Dorsolateral prefrontal cortex (tissue), 120 donors: ENCODE measurements at regions of chr6 and their contacts with region 1.

Region 1: GRCh38 chr6:26097268-26097875 is 10.1 kb downstream of the HFE start:
- DNase-seq: peak in 7 of 10 donors; percentile 58 to 75 (median 64)
- H3K4me3 ChIP-seq: no peak overlapping the region
- H3K27ac ChIP-seq: no peak overlapping the region
- H3K27me3 ChIP-seq: no peaks in the 10 kb centered on the region
- CTCF ChIP-seq: peak; percentile 61 to 94 (median 86)

Region 2: DNA sequence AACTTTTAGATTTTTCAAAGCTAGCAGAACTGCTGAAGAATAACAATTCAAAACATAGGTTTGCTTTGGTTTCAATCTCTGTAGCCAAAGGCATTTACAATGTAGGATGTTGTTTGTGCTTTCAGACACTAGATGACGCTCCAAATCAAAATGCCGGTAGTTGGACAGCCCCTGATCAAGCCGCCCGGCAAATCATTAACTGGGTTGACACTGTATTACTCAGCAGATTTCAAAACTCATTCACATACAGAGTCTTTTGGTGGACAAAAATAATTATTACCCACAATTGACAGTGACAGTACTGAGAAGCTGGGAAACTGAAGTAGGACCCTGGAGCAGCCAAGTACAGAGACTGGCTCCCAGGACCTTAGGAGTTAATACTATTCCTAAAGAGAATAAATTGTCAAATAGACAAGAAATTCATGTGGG is 31.4 kb before region 1 on chr6:
- intact Hi-C with region 1: loop called (anchors 1 to 2 kb)
- DNase-seq: peak in 4 of 10 donors; percentile 16 to 45 (median 30)
- H3K4me3 ChIP-seq: peak overlapping the region in 41 of 59 donors; percentile 1 to 48 (median 24)
- H3K27ac ChIP-seq: peak overlapping the region in 1 of 59 donors; percentile 50
- H3K27me3 ChIP-seq: no peaks in the 10 kb centered on the region
- CTCF ChIP-seq: peak; percentile 59 to 95 (median 85)